Activated CD4-positive, alpha-beta memory T cell treated with anti-CD3 and anti-CD28 coated beads for 36 hours (primary cell): ENCODE measurements at regions of chr2 and their contacts with region 1.

Region 1: DNA sequence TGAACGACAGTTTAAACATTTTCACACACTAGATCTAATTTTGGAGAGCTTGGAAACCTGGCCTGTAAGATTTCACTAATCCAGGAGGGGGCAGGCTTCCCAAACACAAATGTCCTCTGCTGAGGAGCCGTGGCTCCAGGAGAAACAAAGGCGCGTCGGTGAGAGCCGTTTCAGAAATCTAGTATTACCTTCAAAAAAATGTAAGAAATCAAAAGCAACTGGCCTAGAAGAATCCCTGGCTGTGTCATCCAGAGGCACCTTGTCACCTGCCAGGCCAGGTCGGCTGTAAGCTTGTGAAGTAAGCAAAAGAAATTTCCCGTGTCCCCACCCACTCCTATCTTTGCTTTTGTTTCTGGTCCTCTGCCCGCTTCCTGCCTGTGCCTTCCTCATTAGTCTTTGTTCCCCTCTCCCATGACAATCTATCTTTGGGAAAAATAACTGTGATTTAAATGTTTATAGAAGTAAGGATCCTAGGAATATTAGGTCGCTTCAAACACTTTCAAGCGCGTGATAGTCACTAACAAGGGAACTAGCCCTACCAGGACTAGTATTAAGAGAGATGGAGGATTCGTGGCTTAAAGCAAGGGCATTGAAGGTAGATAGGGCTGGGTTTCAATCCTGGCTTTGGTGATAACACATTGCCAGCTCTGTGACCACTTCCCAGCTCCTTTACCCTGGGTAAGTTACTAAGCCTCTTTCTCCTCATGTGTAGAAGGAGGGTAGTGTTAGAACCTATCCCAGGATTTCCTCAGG is 99.5 kb upstream of the STK39 start:
- DNase-seq: peak; percentile 79
- H3K4me3 Mint-ChIP-seq: peak overlapping the region; percentile 75
- H3K27ac Mint-ChIP-seq: no peak overlapping the region
- H3K4me1 Mint-ChIP-seq: peaks cover 4% of the 10 kb centered on the region
- H3K27me3 Mint-ChIP-seq: peaks cover 3% of the 10 kb centered on the region

Region 2: DNA sequence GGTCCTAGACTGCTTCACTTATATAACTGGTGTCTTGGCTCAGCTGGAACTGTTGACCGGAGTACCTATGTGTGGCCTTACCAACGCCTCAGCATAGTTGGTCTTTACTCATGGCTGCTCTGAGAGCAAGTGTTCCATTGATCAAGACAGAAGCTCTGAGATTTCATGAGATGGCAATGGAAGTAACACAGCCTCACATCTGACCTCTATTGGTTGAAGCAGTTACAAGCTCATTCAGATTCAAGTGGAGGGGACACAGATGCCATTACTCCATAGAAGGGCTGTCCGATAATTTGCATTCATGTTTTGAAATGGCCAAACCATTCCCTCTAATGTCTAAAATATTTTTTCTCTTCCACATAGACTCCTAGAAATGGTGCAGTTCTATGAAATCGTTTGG is 53.1 kb before region 1 on chr2:
- CTCF ChIA-PET with region 1: no interaction called
- POLR2A ChIA-PET with region 1: no interaction called
- intact Hi-C with region 1: no loop called
- DNase-seq: no peak
- H3K4me3 Mint-ChIP-seq: no peak overlapping the region
- H3K27ac Mint-ChIP-seq: no peak overlapping the region
- H3K4me1 Mint-ChIP-seq: no peaks in the 10 kb centered on the region
- H3K27me3 Mint-ChIP-seq: no peaks in the 10 kb centered on the region

Region 3: GRCh38 chr2:168312036-168312822 is 34.7 kb before region 1 on chr2:
- CTCF ChIA-PET with region 1: no interaction called
- POLR2A ChIA-PET with region 1: no interaction called
- intact Hi-C with region 1: no loop called
- DNase-seq: no peak
- H3K4me3 Mint-ChIP-seq: no peak overlapping the region
- H3K27ac Mint-ChIP-seq: no peak overlapping the region
- H3K4me1 Mint-ChIP-seq: no peaks in the 10 kb centered on the region
- H3K27me3 Mint-ChIP-seq: no peaks in the 10 kb centered on the region

Region 4: GRCh38 chr2:168434146-168434545 is 87.2 kb after region 1 on chr2:
- CTCF ChIA-PET with region 1: interaction called, 4 read pairs
- POLR2A ChIA-PET with region 1: no interaction called
- intact Hi-C with region 1: loop called (anchors 5 kb)
- DNase-seq: no peak
- H3K4me3 Mint-ChIP-seq: no peak overlapping the region
- H3K27ac Mint-ChIP-seq: no peak overlapping the region
- H3K4me1 Mint-ChIP-seq: peaks cover 35% of the 10 kb centered on the region
- H3K27me3 Mint-ChIP-seq: no peaks in the 10 kb centered on the region

Region 5: DNA sequence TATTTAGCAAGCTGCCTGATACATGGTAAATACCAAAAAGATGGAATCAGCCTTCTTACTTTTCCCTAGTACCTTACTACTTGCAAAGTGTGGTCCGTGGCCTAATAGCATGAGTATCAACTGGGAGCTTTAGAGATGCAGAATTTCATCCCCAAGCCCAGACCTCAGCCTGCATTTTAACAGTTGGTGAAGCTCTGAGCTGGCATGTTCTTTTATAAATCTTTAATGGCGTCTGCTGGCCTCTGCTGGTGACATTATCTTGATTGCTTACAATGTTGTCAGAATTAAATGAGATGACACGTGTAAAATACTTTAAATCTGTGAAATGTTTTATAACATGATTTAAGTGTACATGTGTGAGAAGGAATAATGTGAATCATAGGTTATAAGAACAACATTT is 340.4 kb after region 1 on chr2:
- CTCF ChIA-PET with region 1: interaction called, 11 read pairs
- POLR2A ChIA-PET with region 1: no interaction called
- intact Hi-C with region 1: loop called (anchors 5 kb)
- DNase-seq: no peak
- H3K4me3 Mint-ChIP-seq: no peak overlapping the region
- H3K27ac Mint-ChIP-seq: no peak overlapping the region
- H3K4me1 Mint-ChIP-seq: peaks cover 6% of the 10 kb centered on the region
- H3K27me3 Mint-ChIP-seq: no peaks in the 10 kb centered on the region

Region 6: GRCh38 chr2:168758970-168759820 is 412.3 kb after region 1 on chr2:
- CTCF ChIA-PET with region 1: interaction called, 63 read pairs
- POLR2A ChIA-PET with region 1: no interaction called
- intact Hi-C with region 1: loop called (anchors 1 kb)
- DNase-seq: peak; percentile 21
- H3K4me3 Mint-ChIP-seq: no peak overlapping the region
- H3K27ac Mint-ChIP-seq: no peak overlapping the region
- H3K4me1 Mint-ChIP-seq: peaks cover 39% of the 10 kb centered on the region
- H3K27me3 Mint-ChIP-seq: no peaks in the 10 kb centered on the region